ENCODE measurements at regions of chr5 and their contacts with region 1.

Region 1: DNA sequence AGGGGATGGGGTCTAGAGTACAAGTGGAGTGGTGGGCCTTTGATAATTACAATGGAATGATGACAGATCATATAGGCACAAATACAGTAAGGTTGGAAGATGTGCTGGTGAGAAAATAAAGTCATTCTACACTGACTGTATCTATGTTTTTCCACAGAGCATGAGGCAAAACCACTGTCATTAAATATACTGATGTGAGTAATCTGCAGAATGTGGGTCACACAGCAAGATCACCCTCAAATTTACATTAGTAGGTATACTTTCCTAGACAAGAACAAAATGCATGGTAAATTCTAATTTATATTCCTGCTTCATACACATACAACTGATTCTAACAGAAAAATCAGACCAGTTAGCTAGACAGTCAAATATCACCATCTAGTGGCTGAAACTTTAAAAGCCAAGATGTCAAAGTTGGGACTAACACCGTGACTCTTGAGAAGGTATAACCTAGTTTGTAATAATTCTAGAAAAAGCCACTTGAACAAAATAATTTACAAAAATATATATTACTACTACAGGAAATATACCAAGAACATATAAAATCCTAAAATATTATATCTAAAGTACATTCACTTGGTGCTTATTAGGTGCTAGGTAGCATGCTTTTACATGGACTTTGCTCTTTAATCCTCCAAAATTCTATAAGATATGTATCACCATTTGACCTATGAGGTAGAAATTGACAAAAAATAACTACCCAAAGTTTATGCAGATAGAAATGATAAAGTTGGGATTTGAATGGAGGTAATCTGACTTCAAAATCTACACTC is 19.5 kb downstream of the TTC33 start:
- DNase-seq: peak; percentile 50
- ATAC-seq: peak; percentile 72
- H3K4me3 ChIP-seq: no peak overlapping the region
- H3K27ac ChIP-seq: no peak overlapping the region
- H3K4me1 ChIP-seq: peaks cover 0 to 17% of the 10 kb centered on the region in 2 experiments; a peak in 1 of 4 replicates
- H3K27me3 ChIP-seq: no peaks in the 10 kb centered on the region
- CTCF ChIP-seq: peak; percentile 44 to 75 (median 63); a peak in 5 of 6 replicates
- POLR2A ChIP-seq: no peak
- RAD21 ChIP-seq: peak; percentile 77

Region 2: DNA sequence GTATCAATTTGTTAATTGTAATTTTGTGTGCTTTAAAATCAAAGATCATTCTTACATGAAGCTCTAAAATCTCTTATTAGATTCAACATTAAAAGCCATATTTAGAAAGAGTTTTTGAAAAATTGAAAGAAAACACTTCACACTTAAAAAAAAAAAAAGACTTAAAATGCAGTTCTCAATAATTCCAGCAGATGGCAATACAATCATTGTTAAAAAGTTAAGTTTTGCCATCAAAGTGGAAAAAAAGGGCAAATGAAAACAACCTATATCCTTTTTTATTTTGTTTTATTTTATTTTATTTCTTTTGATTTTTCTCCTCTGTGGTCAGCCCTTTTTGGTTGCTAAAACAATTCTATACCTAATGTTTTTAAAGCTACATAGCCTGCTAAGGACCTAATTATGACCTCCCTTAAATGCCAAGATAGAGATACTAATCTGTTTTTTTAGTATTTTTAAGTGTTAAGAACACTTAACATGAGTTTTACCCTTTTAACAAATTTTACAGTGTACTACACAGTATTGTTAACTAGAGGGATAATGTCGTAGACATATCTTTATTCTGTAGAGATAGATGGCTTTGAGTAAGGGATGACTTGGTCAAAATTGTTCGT is 1157.3 kb before region 1 on chr5:
- CTCF ChIA-PET with region 1: interaction called, 3 read pairs
- POLR2A ChIA-PET with region 1: no interaction called
- RAD21 ChIA-PET with region 1: no interaction called
- intact Hi-C with region 1: loop called (anchors 5 kb)
- DNase-seq: peak; percentile 18
- ATAC-seq: no peak
- H3K4me3 ChIP-seq: no peak overlapping the region
- H3K27ac ChIP-seq: no peak overlapping the region
- H3K4me1 ChIP-seq: no peaks in the 10 kb centered on the region
- H3K27me3 ChIP-seq: no peaks in the 10 kb centered on the region
- CTCF ChIP-seq: peak; percentile 16 to 59 (median 19); a peak in 3 of 6 replicates
- POLR2A ChIP-seq: no peak
- RAD21 ChIP-seq: peak; percentile 62

Region 3: DNA sequence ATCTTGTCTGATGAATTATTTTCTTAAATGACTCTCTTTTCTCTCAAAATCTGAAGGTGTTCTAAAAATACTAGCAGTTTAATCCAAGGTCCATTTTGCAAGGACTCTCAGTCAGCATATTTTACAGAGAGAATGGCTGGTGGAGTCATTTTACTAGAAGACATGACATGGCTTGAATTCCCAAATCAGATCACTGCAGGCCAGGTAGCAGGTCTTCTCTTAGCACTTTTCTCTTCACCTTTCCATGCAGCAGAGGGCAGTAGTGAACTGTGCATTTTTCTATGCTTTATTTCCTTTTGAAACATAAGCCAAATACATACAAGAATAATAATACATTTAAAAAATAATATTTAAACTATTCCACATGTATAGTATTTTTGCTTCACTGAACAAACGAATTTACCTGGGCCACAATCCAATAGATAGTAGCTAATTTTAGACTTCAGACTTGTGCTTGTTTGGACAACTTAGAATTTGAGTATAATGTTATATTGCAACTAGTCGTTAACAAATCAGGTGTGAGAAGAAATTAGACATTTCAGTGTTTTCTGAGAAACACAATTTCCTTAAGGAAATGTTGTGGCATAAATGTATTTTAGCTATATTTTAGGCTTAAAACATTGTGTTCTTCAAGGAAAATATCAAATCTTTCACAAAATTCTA is 1022.1 kb before region 1 on chr5:
- CTCF ChIA-PET with region 1: no interaction called
- POLR2A ChIA-PET with region 1: no interaction called
- RAD21 ChIA-PET with region 1: no interaction called
- intact Hi-C with region 1: loop called (anchors 1 kb)
- DNase-seq: peak; percentile 69
- ATAC-seq: peak; percentile 76
- H3K4me3 ChIP-seq: no peak overlapping the region
- H3K27ac ChIP-seq: no peak overlapping the region
- H3K4me1 ChIP-seq: no peaks in the 10 kb centered on the region; a peak in 1 of 4 replicates
- H3K27me3 ChIP-seq: no peaks in the 10 kb centered on the region
- CTCF ChIP-seq: peak; percentile 53 to 69 (median 65)
- POLR2A ChIP-seq: no peak
- RAD21 ChIP-seq: peak; percentile 80

Region 4: GRCh38 chr5:39948867-39949468 is 787.3 kb before region 1 on chr5:
- CTCF ChIA-PET with region 1: no interaction called
- POLR2A ChIA-PET with region 1: no interaction called
- RAD21 ChIA-PET with region 1: no interaction called
- intact Hi-C with region 1: loop called (anchors 1 kb)
- DNase-seq: peak; percentile 69
- ATAC-seq: peak; percentile 87
- H3K4me3 ChIP-seq: no peak overlapping the region
- H3K27ac ChIP-seq: no peak overlapping the region
- H3K4me1 ChIP-seq: no peaks in the 10 kb centered on the region
- H3K27me3 ChIP-seq: no peaks in the 10 kb centered on the region
- CTCF ChIP-seq: peak; percentile 52 to 74 (median 58); a peak in 5 of 6 replicates
- POLR2A ChIP-seq: no peak
- RAD21 ChIP-seq: peak; percentile 76

Region 5: GRCh38 chr5:41885286-41885685 is 1149.0 kb after region 1 on chr5:
- CTCF ChIA-PET with region 1: no interaction called
- POLR2A ChIA-PET with region 1: no interaction called
- RAD21 ChIA-PET with region 1: no interaction called
- intact Hi-C with region 1: no loop called
- DNase-seq: no peak
- ATAC-seq: no peak
- H3K4me3 ChIP-seq: no peak overlapping the region
- H3K27ac ChIP-seq: no peak overlapping the region
- H3K4me1 ChIP-seq: no peaks in the 10 kb centered on the region
- H3K27me3 ChIP-seq: no peaks in the 10 kb centered on the region
- CTCF ChIP-seq: no peak
- POLR2A ChIP-seq: no peak
- RAD21 ChIP-seq: no peak